AG04450 (cell line): ENCODE measurements at regions of chr12 and their contacts with region 1.

Region 1: GRCh38 chr12:112382232-112382796 is at the start of gene HECTD4:
- DNase-seq: peak; percentile 33
- H3K4me3 ChIP-seq: peak within 1 kb of the TSS; percentile 74
- H3K27ac ChIP-seq: peak within 1 kb of the TSS; percentile 57
- H3K27me3 ChIP-seq: no peaks in the 10 kb centered on the region
- CTCF ChIP-seq: no peak
- polyA plus RNA-seq, gene HECTD4: 8.6 and 9.5 TPM in 2 replicates

Region 2: DNA sequence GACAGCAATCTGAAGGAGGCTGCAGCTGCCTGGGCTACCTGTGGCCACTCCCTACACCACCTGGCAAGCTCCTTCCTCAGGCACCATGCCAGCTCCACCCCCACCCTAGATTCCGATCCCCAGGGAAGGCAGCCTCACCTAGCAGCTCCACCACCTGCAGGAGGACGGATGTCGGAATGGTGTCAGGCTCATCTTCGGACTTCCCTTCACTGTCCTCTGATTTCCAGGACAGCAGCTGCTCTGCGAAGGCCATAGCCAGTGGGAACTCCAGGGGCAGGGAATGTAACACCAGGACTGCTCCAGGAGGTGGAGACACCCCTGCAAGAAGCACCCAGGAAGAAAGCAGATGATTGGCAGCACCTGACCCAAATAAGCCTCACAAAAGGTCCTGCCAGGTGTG is 191.7 kb before region 1 on chr12:
- CTCF ChIA-PET with region 1: interaction called, 79 read pairs
- POLR2A ChIA-PET with region 1: interaction called, 11 read pairs
- DNase-seq: no peak
- H3K4me3 ChIP-seq: no peak overlapping the region
- H3K27ac ChIP-seq: no peak overlapping the region
- H3K27me3 ChIP-seq: no peaks in the 10 kb centered on the region
- CTCF ChIP-seq: no peak

Region 3: GRCh38 chr12:112294793-112295192 is 87.5 kb before region 1 on chr12:
- CTCF ChIA-PET with region 1: interaction called, 14 read pairs
- POLR2A ChIA-PET with region 1: no interaction called
- DNase-seq: no peak
- H3K4me3 ChIP-seq: no peak overlapping the region
- H3K27ac ChIP-seq: no peak overlapping the region
- H3K27me3 ChIP-seq: no peaks in the 10 kb centered on the region
- CTCF ChIP-seq: peak; percentile 35

Region 4: GRCh38 chr12:112823582-112824149 is 441.4 kb after region 1 on chr12:
- CTCF ChIA-PET with region 1: no interaction called
- POLR2A ChIA-PET with region 1: no interaction called
- DNase-seq: no peak
- H3K4me3 ChIP-seq: no peak overlapping the region
- H3K27ac ChIP-seq: no peak overlapping the region
- H3K27me3 ChIP-seq: no peaks in the 10 kb centered on the region
- CTCF ChIP-seq: no peak